Left ventricle myocardium superior (tissue), 1 donor: ENCODE measurements at regions of chr17 and their contacts with region 1.

Region 1: GRCh38 chr17:57130761-57131461 is 45.9 kb downstream of the AKAP1 start:
- DNase-seq: peak; percentile 86
- ATAC-seq: peak; percentile 96

Region 2: DNA sequence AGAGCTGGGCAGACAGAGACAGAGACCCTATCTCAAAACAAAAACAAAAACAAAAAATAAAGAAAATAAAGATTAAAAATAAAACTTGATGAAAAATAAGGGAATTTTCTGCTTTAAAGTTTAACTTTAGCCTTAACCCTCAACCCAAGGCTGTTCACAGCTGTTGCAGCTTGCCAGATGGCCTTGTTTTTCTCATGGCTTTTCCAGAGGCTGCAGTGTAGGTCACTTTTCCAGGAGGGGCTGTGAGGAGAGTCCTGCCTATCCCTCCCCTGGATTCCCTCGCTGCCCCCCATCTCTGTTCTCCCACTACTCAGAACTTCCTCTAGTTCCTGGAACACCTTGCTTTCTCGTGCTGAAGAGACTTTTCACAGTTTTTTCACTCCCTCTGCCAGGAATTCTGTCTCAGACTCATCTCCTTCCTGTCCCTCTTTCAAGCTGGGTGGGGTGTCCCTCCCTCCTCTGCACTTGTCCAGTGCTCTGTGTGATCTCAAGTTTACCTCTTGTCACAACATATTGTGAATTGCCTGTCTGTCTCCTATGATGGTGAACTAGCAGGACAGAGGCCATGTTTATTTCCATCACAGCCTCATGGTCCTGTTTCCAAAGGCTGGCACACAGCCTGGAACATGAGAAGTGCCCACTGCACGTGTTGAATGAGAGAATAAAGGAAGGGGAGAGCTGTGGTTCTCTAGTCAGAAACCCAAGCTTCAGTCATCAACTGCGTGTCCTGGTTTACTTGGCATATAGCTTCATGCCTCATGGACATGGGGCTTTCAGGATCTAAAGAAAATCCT is 55.5 kb after region 1 on chr17:
- intact Hi-C with region 1: no loop called
- DNase-seq: peak; percentile 33
- ATAC-seq: peak; percentile 70

Region 3: DNA sequence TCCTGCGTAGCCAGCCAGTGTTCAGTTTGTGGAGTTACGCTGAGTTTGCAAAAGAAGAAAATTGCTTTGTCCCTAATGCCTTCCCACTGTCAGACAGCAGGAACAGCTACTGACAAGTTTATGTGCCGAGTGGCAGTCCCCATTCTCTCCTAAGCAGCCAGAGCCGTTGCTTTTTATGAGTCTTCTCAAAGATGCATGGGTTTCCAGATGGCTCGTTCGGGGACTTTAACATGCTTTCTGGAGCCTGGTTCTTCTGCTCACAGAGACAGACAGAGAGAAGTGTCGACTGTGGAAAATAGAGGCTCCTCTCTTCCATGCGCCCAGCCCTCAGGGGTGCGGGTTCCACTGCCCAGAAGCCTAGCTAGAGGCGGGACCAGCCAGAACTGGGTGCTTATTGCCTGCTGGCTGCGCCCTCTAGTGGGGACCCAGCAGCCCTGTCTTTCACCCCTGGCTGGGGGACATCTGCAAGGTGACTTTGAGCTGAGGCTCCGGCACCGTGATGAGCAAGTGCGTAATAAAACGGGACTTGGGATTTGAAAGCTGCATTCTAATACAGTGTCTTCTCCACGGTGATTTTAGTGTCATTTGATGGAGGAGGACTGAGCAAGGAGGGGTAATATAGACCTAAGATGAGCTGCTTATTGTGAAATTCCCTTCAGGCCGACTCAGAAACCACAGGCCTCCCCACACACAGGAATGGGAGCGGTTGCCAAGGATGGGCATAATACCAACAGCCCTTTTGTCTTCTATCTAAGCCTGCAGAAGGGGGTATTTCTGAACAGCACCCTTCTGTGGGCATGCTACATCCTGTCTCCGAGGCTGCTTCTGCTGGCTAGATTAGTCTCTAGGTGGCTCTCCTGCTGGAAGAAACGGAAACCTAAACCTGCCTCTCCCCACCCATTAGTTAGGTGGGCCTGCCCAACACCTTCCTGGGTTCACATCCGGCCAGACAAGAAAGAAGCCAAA is 541.0 kb after region 1 on chr17:
- intact Hi-C with region 1: loop called (anchors 10 kb)
- DNase-seq: peak; percentile 82
- ATAC-seq: peak; percentile 92

Region 4: GRCh38 chr17:57747221-57748017 is 616.5 kb after region 1 on chr17:
- intact Hi-C with region 1: loop called (anchors 5 kb)
- DNase-seq: peak; percentile 37
- ATAC-seq: peak; percentile 60